ENCODE measurements at regions of chr13 and their contacts with region 1.

Region 1: GRCh38 chr13:32639502-32640105 is 53.4 kb downstream of the PDS5B start:
- DNase-seq: peak in 1 of 2 donors; percentile 63
- ATAC-seq: peak; percentile 90
- H3K4me3 ChIP-seq: no peak overlapping the region
- H3K27ac ChIP-seq: no peak overlapping the region
- H3K4me1 ChIP-seq: peaks cover 0 to 2% of the 10 kb centered on the region in 2 donors
- H3K27me3 ChIP-seq: no peaks in the 10 kb centered on the region

Region 2: GRCh38 chr13:33723772-33724435 is 1084.3 kb after region 1 on chr13:
- intact Hi-C with region 1: loop called in 1 of 2 experiments (anchors 5 kb)
- DNase-seq: peak in 1 of 2 donors; percentile 82
- ATAC-seq: peak; percentile 87
- H3K4me3 ChIP-seq: no peak overlapping the region
- H3K27ac ChIP-seq: no peak overlapping the region
- H3K4me1 ChIP-seq: no peaks in the 10 kb centered on the region
- H3K27me3 ChIP-seq: no peaks in the 10 kb centered on the region

Measured in aorta (tissue), 5 donors.